Colonic mucosa (tissue), 4 donors: ENCODE measurements at regions of chr3 and their contacts with region 1.

Region 1: GRCh38 chr3:158672293-158673176 is at the start of gene LXN:
- DNase-seq: peak; percentile 95
- H3K4me3 ChIP-seq: peak within 1 kb of the TSS; percentile 64
- H3K27ac ChIP-seq: peak within 1 kb of the TSS; percentile 94
- H3K4me1 ChIP-seq: no peaks in the 10 kb centered on the region
- H3K27me3 ChIP-seq: no peaks in the 10 kb centered on the region
- CTCF ChIP-seq: peak; percentile 66
- total RNA-seq, gene LXN: 22.6 to 55.8 TPM

Region 2: DNA sequence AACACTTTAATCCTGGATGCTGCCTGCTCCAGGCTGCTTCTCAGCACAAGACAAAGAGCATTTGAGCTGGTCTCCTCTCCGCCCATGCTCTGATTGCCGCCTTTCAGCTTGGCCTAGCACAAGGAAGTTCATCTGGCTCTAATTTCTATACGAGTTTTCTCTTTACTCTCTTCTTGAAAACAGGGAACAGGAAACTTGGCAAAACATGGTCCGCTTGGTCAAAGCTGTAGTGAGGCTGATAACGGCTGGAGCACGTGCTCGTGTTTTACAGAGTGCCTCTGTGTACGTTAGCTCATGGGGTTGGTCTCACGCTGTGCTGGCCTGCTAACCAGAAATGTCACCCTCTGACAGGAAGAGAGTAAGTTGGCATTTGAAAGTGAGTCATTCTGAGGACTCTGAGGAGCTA is 40.6 kb after region 1 on chr3:
- intact Hi-C with region 1: loop called (anchors 5 kb)
- DNase-seq: peak; percentile 72
- H3K4me3 ChIP-seq: no peak overlapping the region
- H3K27ac ChIP-seq: peak overlapping the region; percentile 32
- H3K4me1 ChIP-seq: no peaks in the 10 kb centered on the region
- H3K27me3 ChIP-seq: no peaks in the 10 kb centered on the region
- CTCF ChIP-seq: no peak